Common myeloid progenitor, CD34-positive (primary cell): ENCODE measurements at regions of chr7 and their contacts with region 1.

Region 1: DNA sequence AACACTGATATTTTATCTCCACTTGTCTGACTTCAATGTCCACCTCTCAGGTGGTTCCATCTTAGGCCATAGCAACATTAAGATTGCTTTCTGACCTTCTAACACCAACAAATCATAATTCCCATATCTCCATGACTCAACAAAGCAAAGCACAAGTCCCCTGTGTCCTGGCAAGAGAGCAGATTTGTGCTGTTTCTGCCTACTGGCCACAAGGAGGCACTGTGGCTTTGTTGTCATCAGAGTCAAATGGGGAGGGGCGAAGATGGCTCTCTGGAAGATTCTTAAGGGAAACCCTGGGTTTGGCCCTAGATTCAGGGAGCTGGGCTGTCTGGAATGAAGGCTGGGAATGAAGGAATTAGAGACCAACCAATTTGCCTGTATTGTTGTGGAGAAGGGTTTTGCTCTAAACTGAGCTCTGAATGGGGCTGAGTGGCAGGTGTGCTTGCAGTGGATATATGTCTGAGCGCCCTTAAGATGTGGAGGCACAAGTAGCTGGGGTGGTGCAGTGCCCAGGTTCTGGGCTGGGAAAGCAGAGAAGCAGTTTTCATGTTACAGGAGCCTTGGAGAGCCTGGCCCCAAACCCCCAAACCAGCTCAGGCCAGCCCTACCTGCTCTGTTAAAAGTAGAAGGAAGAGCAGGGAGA is 154.8 kb upstream of the PRSS58 start:
- DNase-seq: peak; percentile 80 to 87 (median 84)
- H3K4me3 ChIP-seq: no peak overlapping the region
- H3K27ac ChIP-seq: no peak overlapping the region
- H3K4me1 ChIP-seq: peaks cover 3 to 57% (median 45%) of the 10 kb centered on the region in 4 experiments
- H3K27me3 ChIP-seq: no peaks in the 10 kb centered on the region

Region 2: GRCh38 chr7:141701489-141702046 is 711.1 kb before region 1 on chr7:
- CTCF ChIA-PET with region 1: no interaction called
- POLR2A ChIA-PET with region 1: no interaction called
- DNase-seq: peak; percentile 65 to 91 (median 89)
- H3K4me3 ChIP-seq: peak overlapping the region; percentile 69 to 91 (median 77)
- H3K27ac ChIP-seq: peak overlapping the region in 1 of 2 experiments; percentile 75
- H3K4me1 ChIP-seq: peaks cover 0 to 53% (median 27%) of the 10 kb centered on the region in 4 experiments
- H3K27me3 ChIP-seq: peaks cover 0 to 3% (median 0%) of the 10 kb centered on the region in 5 experiments

Region 3: GRCh38 chr7:142240546-142240945 is 172.1 kb before region 1 on chr7:
- CTCF ChIA-PET with region 1: no interaction called
- POLR2A ChIA-PET with region 1: no interaction called
- DNase-seq: peak in 2 of 3 donors; percentile 18 to 42
- H3K4me3 ChIP-seq: no peak overlapping the region
- H3K27ac ChIP-seq: no peak overlapping the region
- H3K4me1 ChIP-seq: peaks cover 0 to 6% (median 3%) of the 10 kb centered on the region in 4 experiments
- H3K27me3 ChIP-seq: no peaks in the 10 kb centered on the region

Region 4: GRCh38 chr7:142272841-142273240 is 139.8 kb before region 1 on chr7:
- CTCF ChIA-PET with region 1: no interaction called
- POLR2A ChIA-PET with region 1: no interaction called
- DNase-seq: no peak
- H3K4me3 ChIP-seq: no peak overlapping the region
- H3K27ac ChIP-seq: no peak overlapping the region
- H3K4me1 ChIP-seq: no peaks in the 10 kb centered on the region
- H3K27me3 ChIP-seq: peaks cover 0 to 6% (median 0%) of the 10 kb centered on the region in 5 experiments

Region 5: DNA sequence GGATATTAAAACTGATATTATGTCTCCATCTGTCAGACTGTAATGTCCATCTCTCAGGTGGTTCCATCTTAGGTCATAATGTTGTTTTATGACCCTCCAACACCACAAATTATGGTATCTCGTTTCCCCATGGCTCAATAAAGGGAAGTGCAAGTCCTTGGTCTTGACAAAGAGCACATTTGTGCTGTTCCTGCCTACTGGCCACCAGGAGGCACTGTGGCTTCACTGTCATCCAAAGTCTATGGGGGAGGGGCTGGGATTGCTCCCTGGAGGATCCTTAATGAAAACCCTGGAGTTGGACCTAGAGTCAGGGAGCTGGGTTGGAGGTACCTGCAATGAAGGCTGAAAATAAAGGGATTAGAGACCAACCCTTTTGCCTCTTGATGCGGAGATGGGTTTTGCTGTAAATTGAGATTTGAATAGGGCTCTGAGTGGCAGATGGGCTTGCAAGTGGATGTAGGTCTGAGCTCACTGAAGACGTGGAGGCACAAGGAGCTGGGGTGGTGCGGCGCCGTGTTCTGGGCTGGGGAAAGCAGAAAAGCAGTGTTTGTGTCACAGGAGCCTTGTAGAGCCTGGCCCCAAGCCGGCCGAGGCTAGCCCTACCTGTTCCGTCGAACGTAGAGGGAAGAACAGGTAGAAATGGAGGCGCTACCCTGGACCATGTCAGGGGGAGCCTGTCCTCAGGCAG is 25.7 kb after region 1 on chr7:
- CTCF ChIA-PET with region 1: interaction called, 18 read pairs
- POLR2A ChIA-PET with region 1: interaction called, 5 read pairs
- DNase-seq: peak; percentile 69 to 80 (median 77)
- H3K4me3 ChIP-seq: no peak overlapping the region
- H3K27ac ChIP-seq: no peak overlapping the region
- H3K4me1 ChIP-seq: peaks cover 32 to 91% (median 66%) of the 10 kb centered on the region in 4 experiments
- H3K27me3 ChIP-seq: no peaks in the 10 kb centered on the region

Region 6: GRCh38 chr7:142445019-142445686 is 32.5 kb after region 1 on chr7:
- CTCF ChIA-PET with region 1: interaction called, 18 read pairs
- POLR2A ChIA-PET with region 1: no interaction called
- DNase-seq: peak; percentile 63 to 80 (median 78)
- H3K4me3 ChIP-seq: no peak overlapping the region
- H3K27ac ChIP-seq: no peak overlapping the region
- H3K4me1 ChIP-seq: peaks cover 36 to 67% (median 57%) of the 10 kb centered on the region in 4 experiments
- H3K27me3 ChIP-seq: no peaks in the 10 kb centered on the region

Region 7: DNA sequence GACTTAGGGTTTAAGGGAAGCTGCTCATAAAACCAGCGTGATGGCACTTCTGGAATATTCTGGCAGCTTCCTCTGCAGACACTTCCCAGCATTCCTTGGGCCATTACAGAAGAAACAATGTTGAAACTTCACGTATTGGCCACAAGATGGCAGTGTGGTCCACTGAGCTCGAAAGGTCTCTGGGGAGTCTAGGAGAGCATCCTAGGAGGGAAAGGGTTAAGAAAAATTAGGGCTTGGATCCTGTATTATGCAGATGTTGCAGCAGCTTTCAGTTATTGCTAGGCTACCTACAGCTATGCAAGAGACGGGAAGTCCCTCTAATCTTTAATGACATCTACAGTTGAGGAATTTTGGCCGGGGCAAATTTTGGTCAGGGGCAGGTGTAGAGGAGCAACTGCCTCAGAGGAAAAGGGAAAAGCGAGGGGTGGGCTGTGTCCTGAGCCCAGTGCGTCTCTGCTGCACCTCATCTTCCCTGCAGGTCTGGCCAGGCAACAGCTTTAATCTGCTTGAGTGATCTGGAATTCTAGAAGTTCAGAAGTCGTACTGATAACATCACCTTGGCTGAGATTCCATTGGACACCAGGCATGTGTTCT is 65.9 kb after region 1 on chr7:
- CTCF ChIA-PET with region 1: interaction called, 14 read pairs
- POLR2A ChIA-PET with region 1: interaction called, 4 read pairs
- DNase-seq: peak; percentile 57 to 68 (median 66)
- H3K4me3 ChIP-seq: no peak overlapping the region
- H3K27ac ChIP-seq: no peak overlapping the region
- H3K4me1 ChIP-seq: peaks cover 15 to 91% (median 76%) of the 10 kb centered on the region in 4 experiments
- H3K27me3 ChIP-seq: no peaks in the 10 kb centered on the region